IMR-90 (cell line): ENCODE measurements at regions of chr7 and their contacts with region 1.

Region 1: GRCh38 chr7:85186521-85187241 is at the start of gene SEMA3D:
- DNase-seq: peak; percentile 82
- ATAC-seq: peak; percentile 93
- H3K4me3 ChIP-seq: peak within 1 kb of the TSS; percentile 63
- H3K27ac ChIP-seq: peak within 1 kb of the TSS; percentile 3; the same call in 1 of the 2 replicates
- H3K4me1 ChIP-seq: peaks cover 1% of the 10 kb centered on the region; the same call in 1 of the 2 replicates
- H3K27me3 ChIP-seq: peaks cover 4% of the 10 kb centered on the region
- CTCF ChIP-seq: peak; percentile 95
- POLR2A ChIP-seq: no peak
- RAD21 ChIP-seq: peak; percentile 83
- total RNA-seq, gene SEMA3D: 10.8 and 13.6 TPM in 2 replicates

Region 2: DNA sequence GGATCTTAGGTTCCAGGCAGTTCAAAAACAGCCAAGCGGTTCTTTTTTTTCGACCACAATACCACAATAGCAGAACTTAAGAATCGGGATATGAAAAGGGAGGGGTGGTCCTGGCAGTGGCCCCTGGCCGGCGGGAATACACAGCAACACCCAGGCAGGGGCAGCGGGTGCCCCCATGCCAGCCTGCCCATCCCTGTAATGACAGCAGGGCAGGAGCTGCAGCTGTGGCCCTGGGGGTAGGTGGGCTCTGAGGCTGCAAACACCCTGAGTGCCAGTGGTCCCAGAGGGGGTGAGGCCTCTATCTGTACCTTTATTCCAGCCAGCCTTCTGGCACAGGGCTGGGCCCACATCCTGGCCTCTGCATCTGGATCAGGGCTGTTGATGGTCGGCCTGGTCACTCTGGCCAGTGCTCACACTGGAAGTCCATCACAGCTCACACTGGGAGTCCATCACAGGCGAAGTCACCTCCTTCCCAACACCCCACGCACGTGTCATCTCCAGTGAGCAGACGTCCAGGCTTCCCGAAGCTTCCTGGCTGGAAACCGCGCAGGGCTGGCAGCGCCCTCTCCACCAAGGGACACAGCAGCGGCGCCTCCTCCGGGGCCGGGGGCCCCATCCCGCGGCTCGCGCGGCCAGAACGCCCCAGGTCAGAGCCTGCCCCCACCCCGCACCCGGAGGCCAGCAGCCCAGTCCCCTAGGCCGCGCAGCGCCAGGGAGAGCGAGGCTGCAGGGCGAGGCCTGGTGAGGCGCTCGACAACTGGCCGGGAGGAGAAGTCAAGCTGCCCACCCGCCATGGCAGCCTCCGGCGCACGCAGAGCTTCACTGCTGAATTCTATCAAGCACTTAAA is 247.0 kb before region 1 on chr7:
- CTCF ChIA-PET with region 1: no interaction called
- POLR2A ChIA-PET with region 1: no interaction called
- dilution Hi-C with region 1: no loop called
- in situ Hi-C with region 1: no loop called
- intact Hi-C with region 1: no loop called
- DNase-seq: no peak
- ATAC-seq: no peak
- H3K4me3 ChIP-seq: peak overlapping the region; percentile 45
- H3K27ac ChIP-seq: no peak overlapping the region; the same call in 1 of the 2 replicates
- H3K4me1 ChIP-seq: no peaks in the 10 kb centered on the region
- H3K27me3 ChIP-seq: no peaks in the 10 kb centered on the region
- CTCF ChIP-seq: no peak
- POLR2A ChIP-seq: no peak
- RAD21 ChIP-seq: no peak

Region 3: GRCh38 chr7:85041605-85042216 is 145.0 kb before region 1 on chr7:
- CTCF ChIA-PET with region 1: interaction called, 21 read pairs
- POLR2A ChIA-PET with region 1: no interaction called
- dilution Hi-C with region 1: no loop called
- in situ Hi-C with region 1: no loop called
- intact Hi-C with region 1: loop called (anchors 1 kb)
- DNase-seq: peak; percentile 69
- ATAC-seq: peak; percentile 73
- H3K4me3 ChIP-seq: no peak overlapping the region
- H3K27ac ChIP-seq: no peak overlapping the region
- H3K4me1 ChIP-seq: no peaks in the 10 kb centered on the region
- H3K27me3 ChIP-seq: no peaks in the 10 kb centered on the region
- CTCF ChIP-seq: peak; percentile 86
- POLR2A ChIP-seq: no peak
- RAD21 ChIP-seq: peak; percentile 92

Region 4: DNA sequence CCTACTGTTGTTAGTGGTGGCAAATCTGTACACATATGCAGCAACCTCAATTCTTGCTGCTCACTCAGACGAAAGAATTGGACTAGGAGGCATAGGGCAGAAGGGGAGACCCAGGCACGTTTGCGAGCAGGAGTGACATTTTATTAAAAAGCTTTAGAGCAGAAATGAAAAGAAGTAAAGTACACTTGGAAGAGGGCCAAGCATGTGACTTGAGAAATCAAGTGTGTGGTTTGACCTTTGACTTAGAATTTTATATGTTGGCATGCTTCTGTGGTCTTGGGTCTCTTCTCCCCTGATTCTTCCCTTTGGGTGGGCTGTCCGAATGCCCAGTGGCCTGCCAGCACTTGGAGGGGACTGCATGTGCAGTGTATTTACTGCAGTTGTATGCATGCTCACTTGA is 205.6 kb after region 1 on chr7:
- CTCF ChIA-PET with region 1: no interaction called
- POLR2A ChIA-PET with region 1: no interaction called
- dilution Hi-C with region 1: no loop called
- in situ Hi-C with region 1: no loop called
- intact Hi-C with region 1: no loop called
- DNase-seq: no peak
- ATAC-seq: no peak
- H3K4me3 ChIP-seq: no peak overlapping the region
- H3K27ac ChIP-seq: no peak overlapping the region
- H3K4me1 ChIP-seq: no peaks in the 10 kb centered on the region
- H3K27me3 ChIP-seq: no peaks in the 10 kb centered on the region
- CTCF ChIP-seq: no peak
- POLR2A ChIP-seq: no peak
- RAD21 ChIP-seq: no peak

Region 5: DNA sequence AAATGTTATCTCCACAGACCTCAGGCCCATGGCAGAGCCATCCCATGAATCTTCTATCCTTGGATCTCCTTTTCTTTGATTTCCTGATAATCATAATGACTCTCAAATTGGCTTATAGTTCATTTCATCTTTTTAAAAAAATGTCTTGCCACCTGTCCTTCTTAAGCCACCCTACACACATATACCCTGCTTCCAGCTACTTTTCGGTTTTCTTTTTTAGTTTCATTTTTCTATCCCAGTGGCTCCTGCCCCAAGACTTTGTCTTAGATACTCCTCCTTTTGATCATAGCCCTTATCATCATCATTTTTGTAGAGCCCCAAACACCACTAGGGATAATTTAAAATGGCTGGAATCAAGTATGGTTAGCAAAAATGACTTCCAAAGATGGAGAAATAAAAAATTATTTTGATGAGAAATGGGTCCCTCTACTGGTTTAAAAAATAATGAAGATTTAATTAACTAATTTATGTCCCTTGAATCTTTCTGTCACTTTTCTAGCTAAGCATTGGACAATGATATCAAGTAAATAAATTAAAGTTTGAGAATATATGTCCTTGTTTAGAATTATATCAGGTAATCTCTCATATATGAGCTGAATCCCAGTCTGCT is 277.5 kb after region 1 on chr7:
- CTCF ChIA-PET with region 1: interaction called, 13 read pairs
- POLR2A ChIA-PET with region 1: no interaction called
- dilution Hi-C with region 1: no loop called
- in situ Hi-C with region 1: loop called (anchors 10 kb)
- intact Hi-C with region 1: loop called (anchors 1 kb)
- DNase-seq: no peak
- ATAC-seq: peak; percentile 48
- H3K4me3 ChIP-seq: no peak overlapping the region
- H3K27ac ChIP-seq: no peak overlapping the region
- H3K4me1 ChIP-seq: no peaks in the 10 kb centered on the region
- H3K27me3 ChIP-seq: no peaks in the 10 kb centered on the region
- CTCF ChIP-seq: peak; percentile 35
- POLR2A ChIP-seq: no peak
- RAD21 ChIP-seq: peak; percentile 22; the same call in 1 of the 2 replicates

Region 6: DNA sequence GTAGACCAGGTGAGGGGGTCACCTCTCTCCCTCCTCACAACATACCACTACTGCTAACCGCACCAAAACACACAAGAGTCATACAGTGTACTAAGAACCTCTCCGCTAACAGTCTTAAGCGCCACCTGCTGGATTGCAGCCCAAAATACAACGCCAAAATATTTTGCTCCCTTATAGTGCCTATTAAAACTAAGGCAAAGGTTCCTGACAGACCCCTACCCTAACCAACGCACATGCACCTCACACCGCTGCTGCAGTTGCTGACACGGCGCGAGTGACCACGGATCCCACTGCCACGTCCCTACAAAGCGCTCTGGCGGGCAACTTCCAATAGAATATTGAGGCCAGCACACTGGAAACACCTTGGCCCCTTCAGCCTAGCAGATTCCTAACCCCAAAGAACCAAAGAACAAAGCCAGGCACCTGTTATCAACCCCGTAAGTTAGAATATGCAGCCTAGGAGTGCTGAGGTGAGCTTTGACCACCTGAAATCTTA is 563.8 kb after region 1 on chr7:
- CTCF ChIA-PET with region 1: no interaction called
- POLR2A ChIA-PET with region 1: no interaction called
- dilution Hi-C with region 1: no loop called
- in situ Hi-C with region 1: loop called (anchors 10 kb)
- intact Hi-C with region 1: loop called (anchors 1 kb)
- DNase-seq: peak; percentile 37
- ATAC-seq: peak; percentile 93
- H3K4me3 ChIP-seq: no peak overlapping the region
- H3K27ac ChIP-seq: no peak overlapping the region
- H3K4me1 ChIP-seq: no peaks in the 10 kb centered on the region
- H3K27me3 ChIP-seq: no peaks in the 10 kb centered on the region
- CTCF ChIP-seq: peak; percentile 80
- POLR2A ChIP-seq: no peak
- RAD21 ChIP-seq: peak; percentile 80

Region 7: DNA sequence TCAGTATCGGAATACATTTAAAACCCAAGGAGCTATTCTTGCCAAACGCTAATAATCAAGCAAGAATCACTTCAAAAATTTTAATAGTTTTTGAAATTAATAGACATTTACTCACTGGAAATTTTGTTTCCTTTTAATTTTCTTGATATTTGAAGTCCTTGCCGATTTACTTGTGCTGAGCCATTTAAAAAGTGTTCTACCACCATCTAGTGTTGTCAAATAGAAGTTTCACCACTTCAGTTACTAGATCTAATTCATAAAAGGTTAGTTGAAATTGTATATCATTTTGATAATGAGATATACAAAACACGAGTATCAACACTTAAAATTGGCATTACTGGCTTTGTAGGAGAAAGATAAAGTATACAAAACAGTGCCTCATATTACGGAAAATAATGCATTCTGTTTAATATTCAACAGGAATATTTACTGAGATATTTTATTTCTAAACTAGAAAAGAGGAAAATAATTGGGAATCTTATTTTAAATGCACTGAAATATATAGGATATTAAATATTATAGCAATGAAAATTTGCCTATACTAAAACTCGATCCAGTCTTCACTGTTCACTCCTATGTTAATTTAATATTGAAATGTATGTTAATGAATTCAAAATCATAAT is 665.0 kb after region 1 on chr7:
- CTCF ChIA-PET with region 1: interaction called, 6 read pairs
- POLR2A ChIA-PET with region 1: no interaction called
- dilution Hi-C with region 1: no loop called
- in situ Hi-C with region 1: no loop called
- intact Hi-C with region 1: loop called (anchors 5 kb)
- DNase-seq: peak; percentile 69
- ATAC-seq: 0 out of 2 replicates have a peak, but pooled peaks have one; percentile 35
- H3K4me3 ChIP-seq: no peak overlapping the region
- H3K27ac ChIP-seq: no peak overlapping the region
- H3K4me1 ChIP-seq: no peaks in the 10 kb centered on the region
- H3K27me3 ChIP-seq: no peaks in the 10 kb centered on the region
- CTCF ChIP-seq: peak; percentile 57
- POLR2A ChIP-seq: no peak
- RAD21 ChIP-seq: peak; percentile 61